Naive thymus-derived CD4-positive, alpha-beta T cell (primary cell): ENCODE measurements at regions of chr16 and their contacts with region 1.

Region 1: GRCh38 chr16:31202414-31203375 is at the start of gene PYCARD:
- DNase-seq: peak in 6 of 9 donors; percentile 28 to 56 (median 38)
- ATAC-seq: peak; percentile 44
- H3K4me3 ChIP-seq: peak within 1 kb of the TSS; percentile 87
- H3K4me3 Mint-ChIP-seq: peak within 1 kb of the TSS; percentile 71 to 93 (median 90)
- H3K27ac ChIP-seq: peak within 1 kb of the TSS; percentile 73
- H3K27ac Mint-ChIP-seq: peak within 1 kb of the TSS; percentile 68 to 88 (median 85)
- H3K4me1 ChIP-seq: peaks cover 19 to 20% of the 10 kb centered on the region in 2 donors
- H3K4me1 Mint-ChIP-seq: peaks cover 33 to 56% (median 46%) of the 10 kb centered on the region in 7 donors
- H3K27me3 ChIP-seq: no peaks in the 10 kb centered on the region
- H3K27me3 Mint-ChIP-seq: peaks cover 0 to 7% (median 0%) of the 10 kb centered on the region in 5 donors
- total RNA-seq, gene PYCARD: 13.0 to 80.1 (median 21.2) TPM

Region 2: GRCh38 chr16:30445408-30446202 is 757.1 kb before region 1 on chr16 and contains the start of gene SEPHS2:
- CTCF ChIA-PET with region 1: no interaction called
- POLR2A ChIA-PET with region 1: no interaction called
- intact Hi-C with region 1: no loop called
- DNase-seq: peak; percentile 84 to 96 (median 94)
- ATAC-seq: peak; percentile 96
- H3K4me3 ChIP-seq: peak within 1 kb of the TSS; percentile 97
- H3K4me3 Mint-ChIP-seq: peak within 1 kb of the TSS; percentile 85 to 97 (median 95)
- H3K27ac ChIP-seq: peak within 1 kb of the TSS; percentile 92
- H3K27ac Mint-ChIP-seq: peak within 1 kb of the TSS; percentile 90 to 98 (median 96)
- H3K4me1 ChIP-seq: peaks cover 26 to 37% of the 10 kb centered on the region in 2 donors
- H3K4me1 Mint-ChIP-seq: peaks cover 30 to 47% (median 41%) of the 10 kb centered on the region in 7 donors
- H3K27me3 ChIP-seq: no peaks in the 10 kb centered on the region
- H3K27me3 Mint-ChIP-seq: no peaks in the 10 kb centered on the region
- total RNA-seq, gene SEPHS2: 20.9 to 69.6 (median 47.1) TPM

Region 3: DNA sequence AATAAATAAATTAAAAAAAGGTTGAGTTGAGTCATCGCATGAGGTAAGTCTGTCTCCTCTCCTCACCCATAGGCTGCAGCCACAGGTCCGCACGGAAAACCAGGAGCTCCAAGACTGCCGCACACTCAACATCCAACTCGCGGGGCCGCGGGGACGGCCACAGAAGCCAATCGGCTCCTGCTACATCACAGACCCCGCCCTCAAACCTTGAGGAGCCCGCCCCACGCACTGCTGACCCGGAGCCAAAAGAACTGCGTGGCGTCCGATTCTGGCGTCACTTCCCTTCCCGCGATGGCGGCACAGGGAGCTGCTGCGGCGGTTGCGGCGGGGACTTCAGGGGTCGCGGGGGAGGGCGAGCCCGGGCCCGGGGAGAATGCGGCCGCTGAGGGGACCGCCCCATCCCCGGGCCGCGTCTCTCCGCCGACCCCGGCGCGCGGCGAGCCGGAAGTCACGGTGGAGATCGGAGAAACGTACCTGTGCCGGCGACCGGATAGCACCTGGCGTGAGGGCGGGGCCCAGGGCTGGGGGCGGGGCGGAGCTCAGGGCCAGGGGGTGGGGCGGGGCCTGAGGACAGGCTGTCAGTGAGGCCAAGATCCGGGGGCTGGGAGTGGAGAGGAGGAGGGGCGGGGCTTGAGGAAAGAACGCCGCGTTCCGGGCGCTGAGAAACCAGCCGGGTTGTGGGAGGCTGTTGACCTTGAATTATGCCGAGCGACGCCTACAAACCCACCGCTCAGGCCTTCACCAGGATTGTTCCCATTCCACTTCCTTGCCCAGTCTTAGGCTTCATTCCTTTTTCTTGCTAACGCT is 85.1 kb before region 1 on chr16 and contains the start of gene KAT8:
- CTCF ChIA-PET with region 1: no interaction called
- POLR2A ChIA-PET with region 1: interaction called, 5 read pairs
- intact Hi-C with region 1: loop called in 1 of 2 experiments (anchors 5 kb)
- DNase-seq: peak; percentile 88 to 99 (median 97)
- ATAC-seq: peak; percentile 95
- H3K4me3 ChIP-seq: peak within 1 kb of the TSS; percentile 65
- H3K4me3 Mint-ChIP-seq: peak within 1 kb of the TSS; percentile 86 to 95 (median 90)
- H3K27ac ChIP-seq: peak within 1 kb of the TSS; percentile 98
- H3K27ac Mint-ChIP-seq: peak within 1 kb of the TSS; percentile 77 to 96 (median 89)
- H3K4me1 ChIP-seq: peaks cover 7 to 15% of the 10 kb centered on the region in 2 donors
- H3K4me1 Mint-ChIP-seq: peaks cover 12 to 32% (median 24%) of the 10 kb centered on the region in 7 donors
- H3K27me3 ChIP-seq: no peaks in the 10 kb centered on the region
- H3K27me3 Mint-ChIP-seq: no peaks in the 10 kb centered on the region
- total RNA-seq, gene KAT8: 63.0 to 134 (median 112) TPM

Region 4: DNA sequence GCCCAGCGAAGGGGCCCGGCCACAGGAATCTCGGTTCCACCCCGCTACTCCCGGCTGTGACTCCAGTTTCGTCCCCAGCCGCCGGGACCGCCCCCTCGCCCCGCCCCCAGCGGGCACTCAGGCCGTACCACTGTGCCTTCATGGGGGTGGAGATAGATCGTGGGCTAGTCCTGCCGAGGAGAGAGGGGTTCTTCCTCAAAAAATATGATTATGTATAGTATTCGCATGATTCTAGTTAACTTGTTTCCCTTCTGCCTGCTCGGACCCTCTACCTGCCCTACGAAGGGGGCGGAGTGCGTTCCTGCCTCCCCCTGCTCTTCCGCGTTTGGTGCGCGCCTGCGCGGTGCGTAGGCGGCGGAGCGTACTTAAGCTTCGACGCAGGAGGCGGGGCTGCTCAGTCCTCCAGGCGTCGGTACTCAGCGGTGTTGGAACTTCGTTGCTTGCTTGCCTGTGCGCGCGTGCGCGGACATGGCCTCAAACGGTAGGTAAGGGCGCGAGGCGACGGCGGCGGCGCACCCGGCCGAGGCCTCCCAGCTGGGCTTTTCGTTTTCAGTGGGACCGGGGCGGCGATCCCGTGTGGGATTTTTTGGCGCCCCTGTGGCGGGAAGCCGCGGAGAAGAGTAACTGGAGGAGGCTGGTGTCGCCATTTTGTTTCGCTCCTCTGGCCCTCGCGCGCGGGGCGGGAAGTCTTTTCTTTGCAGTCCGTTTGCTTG is 22.8 kb before region 1 on chr16 and contains the start of gene FUS:
- CTCF ChIA-PET with region 1: no interaction called
- POLR2A ChIA-PET with region 1: interaction called, 131 read pairs
- intact Hi-C with region 1: loop called in 1 of 2 experiments (anchors 1 kb)
- DNase-seq: peak; percentile 88 to 97 (median 95)
- ATAC-seq: peak; percentile 87
- H3K4me3 ChIP-seq: peak within 1 kb of the TSS; percentile 76
- H3K4me3 Mint-ChIP-seq: peak within 1 kb of the TSS; percentile 92 to 99 (median 96)
- H3K27ac ChIP-seq: peak within 1 kb of the TSS; percentile 90
- H3K27ac Mint-ChIP-seq: peak within 1 kb of the TSS; percentile 96 to 100 (median 99)
- H3K4me1 ChIP-seq: peaks cover 56% of the 10 kb centered on the region in 2 donors
- H3K4me1 Mint-ChIP-seq: peaks cover 49 to 72% (median 56%) of the 10 kb centered on the region in 7 donors
- H3K27me3 ChIP-seq: no peaks in the 10 kb centered on the region
- H3K27me3 Mint-ChIP-seq: peaks cover 0 to 3% (median 0%) of the 10 kb centered on the region in 5 donors
- total RNA-seq, gene FUS: 597 to 956 (median 714) TPM

Region 5: DNA sequence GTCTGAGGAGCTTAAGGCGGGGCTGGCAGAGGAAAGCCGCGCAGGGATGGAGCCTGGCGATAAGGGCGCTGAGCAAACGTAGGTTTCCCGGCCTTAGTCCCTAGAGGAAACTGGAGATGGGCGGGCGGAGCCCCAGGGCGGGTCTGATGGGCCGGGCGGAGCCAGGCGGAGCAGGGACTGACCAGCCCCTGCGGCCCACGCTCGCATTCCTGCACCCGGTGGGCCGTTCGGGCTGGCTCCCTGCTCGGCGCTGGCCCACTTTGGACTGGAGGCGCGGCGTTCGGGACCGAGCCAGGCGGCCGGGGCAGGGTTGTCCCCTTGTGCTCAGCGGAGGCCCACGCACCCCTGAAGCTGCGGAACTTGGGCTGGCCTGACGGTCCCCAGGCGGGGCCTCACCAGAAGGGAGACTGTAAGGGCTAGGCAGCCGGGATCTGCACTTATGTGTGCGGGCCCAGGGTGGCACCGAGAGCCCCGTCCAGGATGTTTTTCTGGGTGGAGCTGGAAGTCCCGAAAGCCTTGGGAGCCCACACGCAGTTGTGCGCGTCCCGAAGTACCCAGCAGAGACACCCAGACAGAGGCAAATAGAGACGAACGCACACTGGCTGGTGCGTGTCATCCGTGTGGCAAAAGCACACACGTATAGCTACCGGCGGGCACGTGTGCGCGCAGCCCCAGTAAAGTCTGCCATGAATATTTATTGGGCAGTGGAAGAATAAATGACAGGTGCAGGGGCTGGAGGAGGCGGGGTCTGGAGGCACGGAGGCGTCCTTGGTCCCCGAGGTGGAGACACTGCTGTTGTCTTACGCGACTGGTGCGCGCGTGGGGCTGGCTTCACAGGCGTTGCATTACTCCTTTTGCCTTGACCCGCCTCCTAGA is 12.8 kb after region 1 on chr16:
- CTCF ChIA-PET with region 1: interaction called, 6 read pairs
- POLR2A ChIA-PET with region 1: interaction called, 22 read pairs
- intact Hi-C with region 1: loop called in 1 of 2 experiments (anchors 2 kb)
- DNase-seq: peak in 1 of 9 donors; percentile 43
- ATAC-seq: peak; percentile 65
- H3K4me3 ChIP-seq: peak overlapping the region; percentile 30
- H3K4me3 Mint-ChIP-seq: peak overlapping the region; percentile 70 to 88 (median 81)
- H3K27ac ChIP-seq: no peak overlapping the region
- H3K27ac Mint-ChIP-seq: no peak overlapping the region
- H3K4me1 ChIP-seq: peaks cover 18 to 25% of the 10 kb centered on the region in 2 donors
- H3K4me1 Mint-ChIP-seq: peaks cover 17 to 40% (median 19%) of the 10 kb centered on the region in 7 donors
- H3K27me3 ChIP-seq: peaks cover 11 to 19% of the 10 kb centered on the region in 2 donors
- H3K27me3 Mint-ChIP-seq: peaks cover 34 to 54% (median 36%) of the 10 kb centered on the region in 5 donors

Region 6: GRCh38 chr16:31301708-31302400 is 99.2 kb after region 1 on chr16:
- CTCF ChIA-PET with region 1: no interaction called
- POLR2A ChIA-PET with region 1: no interaction called
- intact Hi-C with region 1: loop called in 1 of 2 experiments (anchors 2 kb)
- DNase-seq: no peak
- ATAC-seq: peak; percentile 78
- H3K4me3 ChIP-seq: no peak overlapping the region
- H3K4me3 Mint-ChIP-seq: peak overlapping the region in 1 of 10 donors; percentile 17
- H3K27ac ChIP-seq: no peak overlapping the region
- H3K27ac Mint-ChIP-seq: no peak overlapping the region
- H3K4me1 ChIP-seq: no peaks in the 10 kb centered on the region
- H3K4me1 Mint-ChIP-seq: peaks cover 0 to 17% (median 6%) of the 10 kb centered on the region in 7 donors
- H3K27me3 ChIP-seq: no peaks in the 10 kb centered on the region
- H3K27me3 Mint-ChIP-seq: peaks cover 6 to 27% (median 16%) of the 10 kb centered on the region in 5 donors

Region 7: DNA sequence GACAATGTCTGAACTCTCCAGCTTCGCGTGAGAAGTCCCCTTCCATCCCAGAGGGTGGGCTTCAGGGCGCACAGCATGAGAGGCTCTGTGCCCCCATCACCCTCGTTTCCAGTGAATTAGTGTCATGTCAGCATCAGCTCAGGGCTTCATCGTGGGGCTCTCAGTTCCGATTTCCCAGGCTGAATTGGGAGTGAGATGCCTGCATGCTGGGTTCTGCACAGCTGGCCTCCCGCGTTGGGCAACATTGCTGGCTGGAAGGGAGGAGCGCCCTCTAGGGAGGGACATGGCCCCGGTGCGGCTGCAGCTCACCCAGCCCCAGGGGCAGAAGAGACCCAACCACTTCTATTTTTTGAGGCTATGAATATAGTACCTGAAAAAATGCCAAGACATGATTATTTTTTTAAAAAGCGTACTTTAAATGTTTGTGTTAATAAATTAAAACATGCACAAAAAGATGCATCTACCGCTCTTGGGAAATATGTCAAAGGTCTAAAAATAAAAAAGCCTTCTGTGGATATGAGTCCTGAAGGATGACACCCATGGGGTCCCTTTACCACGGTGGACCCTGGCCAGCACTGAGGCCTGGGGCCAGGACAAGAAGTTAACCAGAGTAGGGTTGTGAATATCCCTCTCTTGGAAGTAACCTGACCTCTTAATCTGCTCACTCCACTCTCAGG is 179.9 kb after region 1 on chr16:
- CTCF ChIA-PET with region 1: no interaction called
- POLR2A ChIA-PET with region 1: interaction called, 3 read pairs
- intact Hi-C with region 1: loop called in 1 of 2 experiments (anchors 1 kb)
- DNase-seq: peak; percentile 24 to 75 (median 47)
- ATAC-seq: peak; percentile 82
- H3K4me3 ChIP-seq: no peak overlapping the region
- H3K4me3 Mint-ChIP-seq: no peak overlapping the region
- H3K27ac ChIP-seq: no peak overlapping the region
- H3K27ac Mint-ChIP-seq: peak overlapping the region in 1 of 9 donors; percentile 22
- H3K4me1 ChIP-seq: peaks cover 0 to 3% of the 10 kb centered on the region in 2 donors
- H3K4me1 Mint-ChIP-seq: peaks cover 0 to 23% (median 4%) of the 10 kb centered on the region in 7 donors
- H3K27me3 ChIP-seq: peaks cover 0 to 4% of the 10 kb centered on the region in 2 donors
- H3K27me3 Mint-ChIP-seq: peaks cover 0 to 8% (median 4%) of the 10 kb centered on the region in 5 donors

Region 8: DNA sequence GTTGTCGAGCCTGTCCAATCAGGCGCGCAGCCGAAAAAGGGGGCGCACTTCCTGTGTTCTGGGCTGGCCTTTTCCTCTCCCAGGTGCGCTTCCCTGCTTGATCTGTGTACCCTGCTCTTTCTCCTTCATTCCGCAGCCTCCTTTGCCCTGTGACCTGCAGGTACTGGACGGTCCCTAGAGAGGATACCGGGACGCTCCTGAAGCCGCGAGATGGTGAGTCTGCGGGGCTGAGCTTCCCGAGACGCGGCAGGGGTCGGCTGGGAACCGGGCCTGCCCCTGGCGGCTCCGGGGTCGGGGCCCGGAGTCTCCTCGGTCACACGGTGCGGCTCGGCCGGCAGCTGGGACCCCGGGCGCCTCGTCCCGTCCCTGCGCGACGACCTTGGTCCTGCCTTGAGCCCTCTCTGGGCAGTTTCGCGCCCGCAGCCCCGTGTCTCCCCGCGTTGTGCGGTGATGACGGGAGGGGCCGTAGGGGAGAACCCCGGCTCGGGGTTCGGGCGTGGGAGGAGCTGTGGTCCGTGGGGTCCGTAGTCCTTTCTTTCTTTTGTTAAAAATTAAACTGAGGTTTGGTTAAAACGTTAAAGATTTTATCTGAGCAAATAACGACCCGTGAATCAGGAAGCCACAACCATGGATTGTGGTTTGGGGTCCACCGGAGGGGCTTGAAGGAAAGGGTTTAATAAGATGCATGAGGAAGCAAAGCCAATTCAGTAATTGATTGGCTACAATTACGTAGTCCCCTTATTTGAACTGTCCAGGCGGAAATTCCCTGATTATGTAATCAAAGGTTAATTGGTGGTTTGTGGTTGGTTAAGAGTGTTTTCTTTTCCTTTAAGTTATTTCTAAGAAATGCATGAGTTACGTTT is 498.1 kb after region 1 on chr16:
- CTCF ChIA-PET with region 1: no interaction called
- POLR2A ChIA-PET with region 1: no interaction called
- intact Hi-C with region 1: no loop called
- DNase-seq: peak; percentile 67 to 86 (median 81)
- ATAC-seq: peak; percentile 84
- H3K4me3 ChIP-seq: peak overlapping the region; percentile 95
- H3K4me3 Mint-ChIP-seq: peak overlapping the region; percentile 87 to 95 (median 91)
- H3K27ac ChIP-seq: peak overlapping the region; percentile 90
- H3K27ac Mint-ChIP-seq: peak overlapping the region; percentile 86 to 97 (median 93)
- H3K4me1 ChIP-seq: peaks cover 19 to 28% of the 10 kb centered on the region in 2 donors
- H3K4me1 Mint-ChIP-seq: peaks cover 20 to 39% (median 37%) of the 10 kb centered on the region in 7 donors
- H3K27me3 ChIP-seq: no peaks in the 10 kb centered on the region
- H3K27me3 Mint-ChIP-seq: peaks cover 0 to 24% (median 0%) of the 10 kb centered on the region in 5 donors